Prostate gland (tissue), 2 donors: ENCODE measurements at regions of chr7 and their contacts with region 1.

Region 1: DNA sequence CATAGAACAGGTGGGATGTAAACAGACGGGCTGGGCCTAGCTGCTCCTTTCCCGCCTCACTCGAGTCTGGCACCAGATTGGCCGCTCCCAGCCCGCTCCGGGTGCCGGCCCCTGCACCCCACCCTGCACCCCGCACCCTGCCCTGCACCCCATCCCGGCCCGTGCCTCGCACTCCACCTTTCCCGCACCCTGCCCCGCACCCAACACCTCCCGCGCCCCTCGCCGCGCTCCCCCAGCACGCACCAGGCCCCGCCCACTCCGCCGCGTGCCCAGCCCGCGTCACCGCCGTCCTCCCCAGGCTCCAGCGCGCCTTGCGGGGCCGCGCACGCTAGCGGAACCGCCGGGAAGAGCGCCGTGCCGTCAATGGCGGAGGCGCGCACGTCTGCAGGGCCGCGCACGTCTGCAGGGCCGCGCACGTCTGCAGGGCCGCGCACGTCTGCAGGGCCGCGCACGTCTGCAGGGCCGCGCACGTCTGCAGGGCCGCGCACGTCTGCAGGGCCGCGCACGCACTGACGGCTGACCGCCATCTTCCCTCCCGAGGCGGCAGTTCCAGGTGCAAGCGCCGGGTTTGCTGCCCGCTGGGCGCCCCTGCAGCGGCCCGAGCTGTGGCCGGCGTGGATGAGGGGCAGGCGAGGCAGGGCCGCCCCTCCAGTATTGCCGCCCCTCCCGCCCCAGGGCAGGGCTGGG is at the start of gene UBE3C:
- DNase-seq: peak; percentile 81
- H3K4me3 ChIP-seq: peak within 1 kb of the TSS; percentile 57 to 72
- H3K27ac ChIP-seq: peak within 1 kb of the TSS; percentile 90 to 91
- H3K4me1 ChIP-seq: peaks cover 7% of the 10 kb centered on the region
- H3K27me3 ChIP-seq: no peaks in the 10 kb centered on the region
- CTCF ChIP-seq: peak in 2 of 4 experiments; percentile 5 to 24
- POLR2A ChIP-seq: peak; percentile 58
- total RNA-seq, gene UBE3C: 49.0 to 72.0 TPM

Region 2: DNA sequence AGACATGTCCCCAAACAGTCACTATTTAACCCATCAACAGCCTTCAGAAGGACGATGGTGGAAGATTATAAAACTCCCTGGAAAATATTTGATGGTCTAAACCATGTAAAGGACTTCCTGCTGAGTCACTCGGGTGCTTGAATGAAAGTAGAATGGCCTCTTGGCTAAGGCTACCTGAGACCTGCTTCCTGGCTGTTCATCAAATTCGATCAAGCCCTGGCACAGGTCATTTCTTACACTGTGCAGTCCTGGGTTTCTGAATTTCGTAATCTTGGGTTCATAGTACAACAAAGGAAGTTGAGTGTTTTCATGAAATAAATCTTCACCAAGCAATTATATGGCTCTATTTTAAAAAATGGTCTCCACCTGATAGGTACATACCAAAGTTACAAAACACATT is 758.3 kb before region 1 on chr7:
- intact Hi-C with region 1: no loop called
- DNase-seq: peak; percentile 67
- H3K4me3 ChIP-seq: no peak overlapping the region
- H3K27ac ChIP-seq: peak overlapping the region in 1 of 2 donors; percentile 46
- H3K4me1 ChIP-seq: no peaks in the 10 kb centered on the region
- H3K27me3 ChIP-seq: no peaks in the 10 kb centered on the region
- CTCF ChIP-seq: no peak
- POLR2A ChIP-seq: no peak

Region 3: GRCh38 chr7:156949541-156950380 is 188.8 kb before region 1 on chr7 and contains the start of gene NOM1:
- intact Hi-C with region 1: loop called (anchors 10 kb)
- DNase-seq: peak; percentile 75
- H3K4me3 ChIP-seq: peak within 1 kb of the TSS; percentile 84 to 91
- H3K27ac ChIP-seq: peak within 1 kb of the TSS; percentile 14 to 58
- H3K4me1 ChIP-seq: peaks cover 9% of the 10 kb centered on the region
- H3K27me3 ChIP-seq: no peaks in the 10 kb centered on the region
- CTCF ChIP-seq: peak; percentile 81 to 95 (median 90)
- POLR2A ChIP-seq: no peak
- total RNA-seq, gene NOM1: 10.4 to 24.3 TPM

Region 4: DNA sequence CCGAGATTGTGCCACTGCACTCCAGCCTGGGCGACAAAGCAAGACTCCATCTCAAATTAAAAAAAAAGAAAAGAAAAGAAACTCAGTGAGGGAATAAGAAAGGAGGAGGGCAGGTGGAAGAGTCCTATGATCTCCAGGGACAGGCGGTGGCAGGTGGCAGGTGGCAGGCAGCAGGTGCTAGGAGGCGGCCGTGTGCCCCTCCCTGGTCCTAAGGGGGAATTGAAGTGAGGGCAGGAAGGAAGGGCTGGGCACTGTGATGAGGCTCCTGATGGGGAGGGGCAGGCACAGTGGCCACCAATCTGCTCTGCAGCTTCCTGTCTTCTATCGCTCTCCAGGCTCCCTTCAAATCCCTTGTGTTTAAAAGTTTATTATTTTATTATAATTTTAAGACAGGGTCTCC is 41.0 kb before region 1 on chr7:
- intact Hi-C with region 1: no loop called
- DNase-seq: no peak
- H3K4me3 ChIP-seq: no peak overlapping the region
- H3K27ac ChIP-seq: no peak overlapping the region
- H3K4me1 ChIP-seq: no peaks in the 10 kb centered on the region
- H3K27me3 ChIP-seq: no peaks in the 10 kb centered on the region
- CTCF ChIP-seq: no peak
- POLR2A ChIP-seq: no peak

Region 5: GRCh38 chr7:157273208-157274093 is 134.9 kb after region 1 on chr7:
- intact Hi-C with region 1: loop called (anchors 10 kb)
- DNase-seq: peak; percentile 46
- H3K4me3 ChIP-seq: no peak overlapping the region
- H3K27ac ChIP-seq: peak overlapping the region; percentile 47 to 83
- H3K4me1 ChIP-seq: peaks cover 18% of the 10 kb centered on the region
- H3K27me3 ChIP-seq: no peaks in the 10 kb centered on the region
- CTCF ChIP-seq: peak; percentile 91 to 96 (median 92)
- POLR2A ChIP-seq: no peak